Sigmoid colon (tissue), 7 donors: ENCODE measurements at regions of chr22 and their contacts with region 1.

Region 1: DNA sequence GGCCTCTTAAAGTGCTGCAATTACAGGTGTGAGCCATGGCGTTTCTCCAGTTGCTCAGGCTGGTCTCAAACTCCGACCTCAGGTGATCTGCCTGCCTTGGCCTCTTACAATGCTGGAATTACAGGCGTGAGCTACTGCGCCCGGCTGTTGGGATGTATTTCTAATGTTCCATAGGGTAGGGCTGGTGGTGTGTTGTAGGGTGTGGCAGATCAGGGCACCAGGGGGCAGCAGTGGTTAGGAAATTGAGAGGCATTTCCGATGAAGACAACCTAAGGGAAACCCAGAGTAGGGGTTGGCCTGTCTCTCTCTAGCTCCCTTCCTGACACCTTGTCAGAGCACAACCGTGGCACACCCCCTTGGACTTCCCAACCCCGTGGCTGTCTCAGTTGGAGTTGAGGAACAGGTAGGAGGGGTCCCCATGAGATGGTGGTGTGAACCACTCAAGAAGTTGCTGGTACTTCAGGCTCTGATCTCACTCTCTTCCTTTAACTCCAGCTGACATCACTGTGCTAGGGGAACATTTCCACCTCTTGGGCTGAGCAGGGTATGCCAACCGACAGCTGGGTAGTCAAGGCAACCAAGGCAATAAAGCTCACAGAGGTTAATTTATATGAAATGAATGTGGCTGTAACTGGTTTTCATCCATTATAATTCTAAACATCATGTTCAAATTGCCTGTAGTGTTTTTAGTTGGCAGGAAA is 33.0 kb downstream of the YWHAH start:
- DNase-seq: peak; percentile 75
- H3K4me3 ChIP-seq: no peak overlapping the region
- H3K27ac ChIP-seq: no peak overlapping the region
- H3K4me1 ChIP-seq: no peaks in the 10 kb centered on the region
- H3K27me3 ChIP-seq: no peaks in the 10 kb centered on the region
- CTCF ChIP-seq: peak; percentile 19 to 69 (median 64)
- EP300 ChIP-seq: no peak
- POLR2A ChIP-seq: no peak

Region 2: GRCh38 chr22:32265882-32266767 is 288.8 kb after region 1 on chr22:
- intact Hi-C with region 1: loop called (anchors 1 kb)
- DNase-seq: peak; percentile 79
- H3K4me3 ChIP-seq: peak overlapping the region in 2 of 4 donors; percentile 10 to 13
- H3K27ac ChIP-seq: no peak overlapping the region
- H3K4me1 ChIP-seq: peaks cover 0 to 3% (median 0%) of the 10 kb centered on the region in 4 donors
- H3K27me3 ChIP-seq: no peaks in the 10 kb centered on the region
- CTCF ChIP-seq: peak; percentile 19 to 77 (median 66)
- EP300 ChIP-seq: no peak
- POLR2A ChIP-seq: no peak